Activated CD8-positive, alpha-beta T cell treated with anti-CD3 and anti-CD28 coated beads, Interleukin-2, amount 10 ng/mL, durations not matched to agents 7 days and 5 days (primary cell): ENCODE measurements at regions of chr16 and their contacts with region 1.

Region 1: DNA sequence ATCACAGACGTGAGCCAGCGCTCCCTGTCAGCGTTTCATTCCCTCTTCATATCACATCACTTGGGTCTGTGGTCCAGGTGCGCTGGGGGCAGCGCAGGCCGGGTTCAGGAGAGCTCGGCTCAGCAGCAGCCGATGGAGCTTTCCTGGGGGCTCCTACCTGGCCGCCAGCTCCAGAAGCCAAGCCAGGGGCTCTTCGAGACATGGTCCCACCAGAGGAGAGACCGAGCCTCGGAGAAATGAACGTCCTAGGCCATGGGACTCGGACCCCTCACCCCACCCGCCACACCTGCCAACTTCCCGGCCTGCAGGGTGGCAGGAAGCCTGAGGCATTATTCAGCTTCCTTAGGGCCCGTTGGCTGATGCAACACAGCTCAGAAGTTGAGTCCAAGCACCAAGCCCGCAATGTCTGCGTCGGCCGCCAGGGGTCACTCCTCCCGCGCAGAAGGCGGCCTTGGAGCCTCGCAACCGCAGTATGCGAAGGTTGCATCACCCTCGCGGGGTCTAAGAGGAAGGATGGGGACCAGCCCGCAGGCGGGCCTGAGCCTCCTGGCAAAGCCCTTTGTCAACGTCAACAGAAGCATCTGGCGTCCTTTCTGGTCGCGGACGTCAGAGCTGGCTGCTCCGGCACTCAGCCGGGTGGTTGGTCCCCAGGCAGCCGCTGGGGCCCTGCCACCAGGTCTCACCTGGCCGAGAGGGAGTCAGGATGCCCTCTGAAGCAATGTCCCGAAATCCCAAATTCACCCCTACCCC is 13.2 kb upstream of the KLHDC4 start:
- DNase-seq: peak; percentile 97
- ATAC-seq: peak; percentile 80
- H3K4me3 Mint-ChIP-seq: peak overlapping the region; percentile 66
- H3K27ac Mint-ChIP-seq: peak overlapping the region; percentile 97
- H3K4me1 Mint-ChIP-seq: peaks cover 65% of the 10 kb centered on the region
- H3K27me3 Mint-ChIP-seq: no peaks in the 10 kb centered on the region

Region 2: GRCh38 chr16:87765776-87766484 is 13.1 kb before region 1 on chr16 and contains the start of gene KLHDC4:
- CTCF ChIA-PET with region 1: interaction called, 89 read pairs
- POLR2A ChIA-PET with region 1: interaction called, 22 read pairs
- DNase-seq: peak; percentile 94
- ATAC-seq: peak; percentile 78
- H3K4me3 Mint-ChIP-seq: peak within 1 kb of the TSS; percentile 96
- H3K27ac Mint-ChIP-seq: peak within 1 kb of the TSS; percentile 99
- H3K4me1 Mint-ChIP-seq: peaks cover 40% of the 10 kb centered on the region
- H3K27me3 Mint-ChIP-seq: no peaks in the 10 kb centered on the region
- total RNA-seq, gene KLHDC4: 91.7 to 101 TPM

Region 3: DNA sequence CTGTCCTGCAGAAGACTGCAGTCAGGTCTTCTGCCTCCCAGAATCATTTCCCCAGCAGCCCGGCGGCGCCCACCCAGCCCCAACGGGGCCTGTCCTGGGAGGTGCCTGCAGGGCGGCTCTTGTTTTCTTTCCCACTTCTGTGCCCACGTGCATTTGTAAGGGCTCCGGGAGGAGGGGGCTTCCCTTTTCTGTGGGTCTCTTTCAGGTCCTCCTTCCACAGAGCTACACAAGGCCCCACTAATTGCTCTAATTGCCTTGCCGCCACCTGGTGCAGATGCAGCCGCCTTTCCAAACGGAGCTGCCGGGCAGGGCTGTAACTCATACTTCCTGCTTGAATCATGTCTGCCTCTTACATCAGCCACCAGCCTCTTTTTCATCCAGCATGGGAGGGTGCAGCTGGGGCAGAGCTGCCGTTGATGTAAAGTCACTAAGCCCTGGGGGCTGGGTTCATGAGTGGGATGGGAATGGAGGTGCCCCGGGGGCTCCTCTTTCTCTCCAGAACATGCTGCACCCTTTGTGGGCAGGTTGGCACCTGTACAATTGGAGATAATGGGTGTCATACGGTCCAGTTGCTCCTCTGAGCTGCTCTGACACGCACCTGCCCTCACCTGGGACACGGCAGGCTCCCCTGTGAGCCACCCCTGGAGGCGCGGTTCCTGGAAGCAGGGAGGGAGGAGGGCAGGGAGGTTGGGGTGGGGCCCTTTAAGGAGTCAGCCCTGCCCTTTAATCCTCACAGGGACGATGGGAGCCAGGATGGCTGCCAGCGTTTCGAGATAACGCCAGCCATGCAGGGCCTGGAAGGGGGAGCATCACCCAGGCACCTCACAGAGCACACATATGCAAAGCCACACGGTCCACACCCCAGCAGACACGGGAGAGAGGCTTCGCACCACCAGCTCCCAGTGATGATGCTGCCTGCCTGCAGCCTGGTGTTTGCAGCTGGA is 27.9 kb after region 1 on chr16:
- CTCF ChIA-PET with region 1: interaction called, 47 read pairs
- POLR2A ChIA-PET with region 1: interaction called, 20 read pairs
- DNase-seq: peak; percentile 67
- ATAC-seq: peak; percentile 83
- H3K4me3 Mint-ChIP-seq: peak overlapping the region; percentile 86
- H3K27ac Mint-ChIP-seq: peak overlapping the region; percentile 98
- H3K4me1 Mint-ChIP-seq: peaks cover 46% of the 10 kb centered on the region
- H3K27me3 Mint-ChIP-seq: peaks cover 5% of the 10 kb centered on the region

Region 4: GRCh38 chr16:87822108-87822970 is 43.3 kb after region 1 on chr16:
- CTCF ChIA-PET with region 1: interaction called, 10 read pairs
- POLR2A ChIA-PET with region 1: no interaction called
- DNase-seq: no peak
- ATAC-seq: no peak
- H3K4me3 Mint-ChIP-seq: no peak overlapping the region
- H3K27ac Mint-ChIP-seq: peak overlapping the region; percentile 60
- H3K4me1 Mint-ChIP-seq: peaks cover 11% of the 10 kb centered on the region
- H3K27me3 Mint-ChIP-seq: no peaks in the 10 kb centered on the region

Region 5: GRCh38 chr16:87860553-87861299 is 81.7 kb after region 1 on chr16:
- CTCF ChIA-PET with region 1: interaction called, 493 read pairs
- POLR2A ChIA-PET with region 1: interaction called, 96 read pairs
- DNase-seq: no peak
- ATAC-seq: peak; percentile 5
- H3K4me3 Mint-ChIP-seq: no peak overlapping the region
- H3K27ac Mint-ChIP-seq: peak overlapping the region; percentile 75
- H3K4me1 Mint-ChIP-seq: peaks cover 80% of the 10 kb centered on the region
- H3K27me3 Mint-ChIP-seq: no peaks in the 10 kb centered on the region

Region 6: DNA sequence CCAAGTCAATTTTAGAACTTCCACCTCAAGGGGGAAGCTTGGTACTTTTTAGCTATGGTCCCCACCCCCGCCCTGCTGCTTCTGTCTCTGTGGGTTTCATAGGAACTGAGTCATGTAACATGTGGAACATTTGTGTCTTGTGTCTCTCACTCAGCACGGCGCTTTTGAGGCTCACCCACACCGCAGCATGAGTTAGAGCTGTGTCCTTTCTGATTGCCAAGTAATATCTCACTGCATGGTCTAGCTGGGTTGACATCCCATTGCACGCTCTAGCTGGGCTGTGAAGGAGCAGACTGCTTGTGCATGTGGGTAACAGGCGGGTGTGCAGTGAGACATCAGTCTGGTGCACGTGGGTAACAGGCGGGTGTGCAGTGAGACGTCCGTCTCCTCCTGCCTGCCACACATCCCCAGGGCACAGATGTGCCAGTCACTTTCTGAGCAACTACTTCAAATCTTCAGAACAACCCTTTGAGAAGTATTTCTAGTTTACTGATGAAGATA is 116.7 kb after region 1 on chr16:
- CTCF ChIA-PET with region 1: interaction called, 58 read pairs
- POLR2A ChIA-PET with region 1: interaction called, 3 read pairs
- DNase-seq: peak; percentile 92
- ATAC-seq: peak; percentile 84
- H3K4me3 Mint-ChIP-seq: peak overlapping the region; percentile 56
- H3K27ac Mint-ChIP-seq: peak overlapping the region; percentile 96
- H3K4me1 Mint-ChIP-seq: peaks cover 54% of the 10 kb centered on the region
- H3K27me3 Mint-ChIP-seq: no peaks in the 10 kb centered on the region

Region 7: DNA sequence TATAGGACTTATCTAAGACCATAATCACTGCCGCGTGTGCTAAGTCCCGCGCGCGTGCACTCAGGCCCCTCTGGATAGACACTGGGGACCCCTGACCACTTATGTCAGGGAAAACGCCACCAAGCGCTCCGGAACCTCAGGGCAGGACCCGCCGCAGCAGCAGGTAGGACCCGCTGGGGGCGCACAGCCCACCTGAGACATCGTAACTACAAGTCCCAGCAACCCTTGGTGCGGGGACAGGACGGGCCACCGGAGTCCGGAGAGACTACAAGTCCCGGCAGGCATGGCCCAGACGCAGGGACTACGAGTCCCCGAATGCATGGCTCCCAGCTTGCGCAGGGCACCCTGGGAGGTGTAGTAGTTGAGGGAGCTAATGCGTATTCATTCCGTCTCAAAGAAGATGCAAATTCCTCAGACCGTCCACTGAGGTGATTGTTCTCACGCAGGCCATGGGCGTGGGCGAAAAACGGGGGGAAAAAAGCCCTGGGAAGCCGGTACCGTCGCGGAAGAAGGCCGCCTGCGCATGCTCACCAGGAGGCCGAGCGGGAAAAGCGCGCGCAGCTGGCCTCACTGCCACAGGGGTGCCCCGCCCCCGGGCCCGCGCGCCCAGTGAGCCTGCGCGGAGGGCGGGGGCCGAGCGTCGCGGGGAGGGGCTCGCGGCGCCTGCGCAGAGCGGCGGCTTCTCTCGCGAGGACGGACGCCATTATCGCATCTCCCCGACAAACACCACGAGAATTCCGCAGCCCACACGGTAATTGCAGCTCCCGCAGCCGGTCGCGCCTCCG is 172.0 kb after region 1 on chr16 and contains the start of gene BANP:
- CTCF ChIA-PET with region 1: interaction called, 37 read pairs
- POLR2A ChIA-PET with region 1: interaction called, 6 read pairs
- DNase-seq: peak; percentile 99
- ATAC-seq: peak; percentile 96
- H3K4me3 Mint-ChIP-seq: peak within 1 kb of the TSS; percentile 96
- H3K27ac Mint-ChIP-seq: peak within 1 kb of the TSS; percentile 100
- H3K4me1 Mint-ChIP-seq: peaks cover 79% of the 10 kb centered on the region
- H3K27me3 Mint-ChIP-seq: no peaks in the 10 kb centered on the region
- total RNA-seq, gene BANP: 34.1 to 39.8 TPM